ENCODE measurements at regions of chr16 and their contacts with region 1.

Region 1: DNA sequence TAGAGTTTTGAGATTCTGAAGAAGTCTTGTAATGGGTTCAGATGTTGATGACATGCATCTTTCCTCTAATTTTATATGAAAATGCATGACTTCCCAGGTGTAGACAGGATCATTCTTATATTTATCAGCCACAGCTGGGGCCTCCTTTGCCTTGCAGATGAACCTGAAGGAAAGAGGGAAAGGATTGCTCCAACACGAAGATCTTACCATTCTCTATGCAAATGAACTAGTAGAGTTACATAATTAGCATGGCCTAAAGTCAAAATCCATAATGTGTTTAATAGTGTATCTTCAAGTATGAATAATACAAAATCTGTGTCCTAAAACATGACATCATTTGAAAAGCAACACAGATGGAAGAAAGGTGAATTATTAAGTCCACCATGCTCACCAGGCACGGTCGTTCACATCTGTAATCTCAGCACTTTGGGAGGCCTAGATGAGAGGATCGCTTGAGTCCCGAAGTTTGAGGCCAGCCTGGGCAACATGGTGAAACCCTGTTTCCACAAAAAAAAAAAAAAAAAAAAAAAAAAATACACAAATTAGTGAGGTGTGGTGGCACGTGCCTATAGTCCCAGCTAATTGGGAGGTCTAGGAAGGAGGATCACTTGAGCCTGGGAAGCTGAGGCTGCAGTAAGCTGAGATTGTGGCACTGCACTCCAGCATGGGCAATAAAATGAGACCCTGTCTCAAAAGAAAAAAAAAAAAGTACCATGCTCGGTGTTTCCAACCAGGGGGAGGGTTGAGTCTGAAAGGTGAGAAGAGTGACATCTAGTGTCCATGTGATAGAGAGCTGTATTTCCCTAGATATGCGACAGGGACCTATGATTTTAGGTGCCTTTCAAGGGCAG is 6.3 kb downstream of the VWA3A start:
- DNase-seq: peak in 4 of 5 donors; percentile 34 to 54 (median 40)
- H3K4me3 ChIP-seq: no peak overlapping the region
- H3K4me3 Mint-ChIP-seq: peak overlapping the region in 4 of 8 donors; percentile 21 to 70 (median 38)
- H3K27ac ChIP-seq: no peak overlapping the region
- H3K27ac Mint-ChIP-seq: no peak overlapping the region
- H3K4me1 ChIP-seq: no peaks in the 10 kb centered on the region
- H3K4me1 Mint-ChIP-seq: peaks cover 0 to 4% (median 0%) of the 10 kb centered on the region in 4 donors
- H3K27me3 ChIP-seq: no peaks in the 10 kb centered on the region
- H3K27me3 Mint-ChIP-seq: peaks cover 2 to 15% of the 10 kb centered on the region in 2 donors

Region 2: GRCh38 chr16:22001591-22001990 is 97.0 kb before region 1 on chr16:
- CTCF ChIA-PET with region 1: interaction called, 4 read pairs
- POLR2A ChIA-PET with region 1: no interaction called
- intact Hi-C with region 1: loop called (anchors 1 kb)
- DNase-seq: no peak
- H3K4me3 ChIP-seq: no peak overlapping the region
- H3K4me3 Mint-ChIP-seq: no peak overlapping the region
- H3K27ac ChIP-seq: no peak overlapping the region
- H3K27ac Mint-ChIP-seq: no peak overlapping the region
- H3K4me1 ChIP-seq: peaks cover 9% of the 10 kb centered on the region
- H3K4me1 Mint-ChIP-seq: peaks cover 4 to 18% (median 13%) of the 10 kb centered on the region in 4 donors
- H3K27me3 ChIP-seq: no peaks in the 10 kb centered on the region
- H3K27me3 Mint-ChIP-seq: no peaks in the 10 kb centered on the region

Region 3: DNA sequence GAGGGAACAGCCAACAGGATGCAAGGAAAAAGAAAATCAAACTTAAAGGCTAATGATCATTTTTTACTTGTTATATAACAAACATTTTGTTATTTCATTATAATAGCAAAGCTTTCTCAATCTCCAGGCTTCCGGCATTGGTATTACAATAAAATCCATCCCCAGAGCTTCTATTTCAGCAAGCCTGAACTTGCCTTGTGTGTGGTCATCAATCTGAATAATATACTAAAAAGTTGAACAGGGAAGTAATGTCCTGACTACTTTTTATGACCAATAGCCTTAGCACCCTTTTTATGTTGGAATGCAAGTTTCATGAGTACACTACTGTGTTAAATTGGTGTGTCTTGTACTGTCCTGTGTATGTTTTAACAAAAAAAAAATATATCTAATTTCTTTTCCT is 33.4 kb before region 1 on chr16:
- CTCF ChIA-PET with region 1: no interaction called
- POLR2A ChIA-PET with region 1: no interaction called
- intact Hi-C with region 1: no loop called
- DNase-seq: no peak
- H3K4me3 ChIP-seq: no peak overlapping the region
- H3K4me3 Mint-ChIP-seq: no peak overlapping the region
- H3K27ac ChIP-seq: no peak overlapping the region
- H3K27ac Mint-ChIP-seq: no peak overlapping the region
- H3K4me1 ChIP-seq: peaks cover 3% of the 10 kb centered on the region
- H3K4me1 Mint-ChIP-seq: peaks cover 0 to 6% (median 1%) of the 10 kb centered on the region in 4 donors
- H3K27me3 ChIP-seq: no peaks in the 10 kb centered on the region
- H3K27me3 Mint-ChIP-seq: no peaks in the 10 kb centered on the region

Region 4: DNA sequence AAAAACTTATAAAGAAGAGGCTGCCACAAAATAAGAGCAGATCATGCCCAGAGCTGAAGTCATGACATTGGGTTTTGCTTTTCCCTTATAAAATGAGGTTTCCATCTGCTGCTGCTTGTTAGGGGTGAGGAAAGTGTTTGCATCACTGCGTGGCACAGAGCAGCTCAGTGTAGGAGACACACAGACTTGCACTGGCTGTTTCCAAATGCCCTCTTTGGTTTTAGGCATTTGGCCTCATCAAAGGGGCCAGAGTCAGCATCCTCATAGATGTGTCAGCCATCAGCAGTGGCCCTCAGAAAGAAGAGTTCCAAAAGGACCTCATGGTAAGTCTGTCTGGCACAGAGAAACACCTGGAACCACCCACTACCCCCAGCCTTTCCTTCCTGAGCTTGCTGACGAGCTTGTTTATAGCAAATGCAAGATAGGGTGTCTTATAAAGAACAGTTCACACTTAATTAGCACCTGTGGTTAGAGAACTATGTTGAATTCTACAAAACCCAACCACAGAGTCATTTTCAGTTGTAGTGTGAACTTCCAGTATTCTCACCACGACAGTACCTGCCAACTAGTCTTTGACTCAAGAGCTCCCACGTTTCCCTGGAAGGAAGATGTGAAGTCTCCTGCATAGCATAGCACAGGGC is 10.7 kb after region 1 on chr16:
- CTCF ChIA-PET with region 1: interaction called, 10 read pairs
- POLR2A ChIA-PET with region 1: no interaction called
- intact Hi-C with region 1: no loop called
- DNase-seq: no peak
- H3K4me3 ChIP-seq: no peak overlapping the region
- H3K4me3 Mint-ChIP-seq: no peak overlapping the region
- H3K27ac ChIP-seq: no peak overlapping the region
- H3K27ac Mint-ChIP-seq: peak overlapping the region in 1 of 7 donors; percentile 5
- H3K4me1 ChIP-seq: no peaks in the 10 kb centered on the region
- H3K4me1 Mint-ChIP-seq: peaks cover 0 to 2% (median 0%) of the 10 kb centered on the region in 4 donors
- H3K27me3 ChIP-seq: no peaks in the 10 kb centered on the region
- H3K27me3 Mint-ChIP-seq: peaks cover 6 to 8% of the 10 kb centered on the region in 2 donors

Measured in CD4-positive, alpha-beta memory T cell (primary cell).